Right ventricle myocardium inferior (tissue), 1 donor: ENCODE measurements at regions of chr1 and their contacts with region 1.

Region 1: DNA sequence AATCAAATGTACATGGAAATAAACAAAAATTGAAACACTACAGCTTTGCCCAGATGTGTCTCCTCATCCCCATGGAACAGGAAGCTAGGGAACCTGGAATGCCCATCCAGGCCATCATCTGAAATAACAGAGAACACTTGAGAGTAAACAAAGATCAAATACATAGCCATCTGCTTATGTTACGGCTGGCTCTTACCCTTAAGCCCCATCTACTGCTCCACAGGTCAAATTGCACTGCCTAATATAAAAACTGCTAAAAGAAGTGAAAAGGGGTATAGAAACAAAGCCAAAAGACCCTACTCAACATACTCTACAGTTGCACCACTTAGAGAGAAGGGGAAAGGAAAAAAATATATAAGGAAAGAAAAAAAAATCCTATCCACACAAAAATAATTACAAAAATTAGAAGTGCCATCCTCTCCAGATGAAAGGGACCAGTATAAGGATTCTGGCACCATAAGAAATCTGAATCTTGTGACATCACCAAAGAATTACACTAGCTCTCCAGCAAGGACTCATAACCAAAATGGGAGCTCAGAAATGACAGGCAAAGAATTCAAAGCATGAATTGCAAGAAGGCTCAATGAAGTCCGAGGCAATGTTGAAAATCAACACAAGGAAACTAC is 26.9 kb downstream of the OR6Y1 start:
- DNase-seq: no peak
- ATAC-seq: no peak

Region 2: DNA sequence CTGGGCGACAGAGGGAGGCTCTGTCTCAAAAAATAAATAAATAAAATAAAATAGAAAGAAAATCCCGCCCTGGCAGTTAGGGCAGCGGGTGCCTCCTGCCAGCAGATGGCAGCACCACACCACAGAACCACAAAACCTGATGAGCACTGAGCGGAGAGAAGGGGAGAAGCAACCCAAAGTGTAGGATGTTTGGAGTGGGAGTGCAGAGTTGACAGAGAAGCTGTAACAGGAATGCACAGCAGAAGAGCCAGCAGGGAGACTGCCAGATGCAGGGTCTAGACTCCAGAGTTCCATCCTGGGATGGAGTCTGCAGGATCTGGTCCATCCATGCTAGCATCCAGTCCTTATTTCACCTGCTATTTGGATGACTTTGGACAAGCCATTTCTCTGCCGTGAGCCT is 563.6 kb before region 1 on chr1:
- intact Hi-C with region 1: loop called (anchors 10 kb)
- DNase-seq: peak; percentile 70
- ATAC-seq: peak; percentile 81